ENCODE measurements at regions of chr11 and their contacts with region 1.

Region 1: GRCh38 chr11:86291466-86292262 is 10.4 kb upstream of the HIKESHI start:
- H3K4me3 ChIP-seq: no peak overlapping the region
- H3K27ac ChIP-seq: no peak overlapping the region
- H3K4me1 ChIP-seq: no peaks in the 10 kb centered on the region
- CTCF ChIP-seq: peak; percentile 33; the same call in 1 of the 2 replicates

Region 2: GRCh38 chr11:85854557-85855340 is 436.9 kb before region 1 on chr11:
- CTCF ChIA-PET with region 1: interaction called, 13 read pairs
- POLR2A ChIA-PET with region 1: no interaction called
- H3K4me3 ChIP-seq: peak overlapping the region; percentile 39
- H3K27ac ChIP-seq: no peak overlapping the region
- H3K4me1 ChIP-seq: no peaks in the 10 kb centered on the region
- CTCF ChIP-seq: peak; percentile 88

Region 3: GRCh38 chr11:86099874-86100273 is 191.8 kb before region 1 on chr11:
- CTCF ChIA-PET with region 1: no interaction called
- POLR2A ChIA-PET with region 1: no interaction called
- H3K4me3 ChIP-seq: no peak overlapping the region
- H3K27ac ChIP-seq: no peak overlapping the region
- H3K4me1 ChIP-seq: 0 out of 2 replicates have a peak, but pooled peaks cover 2% of the 10 kb centered on the region
- CTCF ChIP-seq: no peak

Region 4: DNA sequence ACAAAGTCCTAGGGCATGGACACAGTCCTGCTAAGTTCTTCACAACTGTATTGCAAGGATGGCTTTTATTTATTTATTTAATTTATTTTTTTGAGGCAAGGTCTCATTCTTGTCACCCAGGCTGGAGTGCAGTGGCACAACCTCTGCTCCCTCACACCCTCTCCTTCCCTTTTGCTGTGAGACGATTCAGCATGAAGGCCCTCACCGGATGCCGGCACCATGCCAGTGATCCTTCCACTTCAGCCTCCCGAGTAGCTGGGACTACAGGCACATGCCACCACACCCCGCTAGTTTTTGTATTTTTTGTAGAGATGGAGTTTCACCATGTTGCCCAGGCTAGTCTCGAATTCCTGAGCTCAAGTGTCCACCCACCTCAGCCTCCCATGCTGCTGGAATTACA is 29.3 kb before region 1 on chr11:
- CTCF ChIA-PET with region 1: interaction called, 3 read pairs
- POLR2A ChIA-PET with region 1: interaction called, 12 read pairs
- H3K4me3 ChIP-seq: no peak overlapping the region
- H3K27ac ChIP-seq: no peak overlapping the region
- H3K4me1 ChIP-seq: no peaks in the 10 kb centered on the region
- CTCF ChIP-seq: no peak

Region 5: DNA sequence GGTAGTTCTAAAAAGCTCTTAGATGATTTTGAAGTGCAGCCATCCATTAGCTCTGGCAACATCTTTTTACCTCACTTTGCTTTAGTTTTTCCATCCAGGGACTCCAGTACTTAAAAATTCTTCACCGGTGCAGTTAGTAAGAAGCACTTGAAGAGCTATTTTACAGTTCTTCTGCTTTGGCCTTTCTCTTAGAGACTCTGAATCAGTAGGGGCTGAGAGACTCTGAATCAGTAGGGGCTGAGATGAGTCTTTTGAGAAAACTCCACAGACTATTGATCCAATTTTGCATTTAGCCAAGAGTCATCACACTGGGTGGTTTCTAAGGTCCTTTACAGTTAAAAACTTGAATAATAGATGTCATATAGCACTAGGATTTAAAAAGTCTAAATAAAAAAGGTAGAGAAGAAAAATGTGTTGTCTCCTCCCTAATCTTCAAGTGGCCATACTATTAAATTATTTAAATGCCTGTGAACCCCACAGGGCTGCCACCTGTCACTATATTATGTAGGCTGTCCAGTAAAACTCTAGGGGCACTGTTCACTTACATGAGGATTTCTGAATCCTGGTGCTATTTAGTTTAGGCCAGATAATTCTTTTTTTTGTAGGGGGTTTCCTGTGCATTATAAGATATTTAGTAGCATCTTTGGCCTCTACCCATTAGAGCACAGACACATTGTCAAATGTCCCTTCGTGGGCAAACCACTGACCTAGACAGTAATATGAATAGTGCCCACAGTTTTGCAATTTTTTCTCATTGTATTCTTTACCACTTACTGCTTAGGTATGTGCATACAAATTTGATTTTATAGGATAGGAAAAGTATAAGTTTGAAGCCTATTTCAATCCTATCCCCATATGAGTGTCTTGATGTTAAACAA is 15.9 kb before region 1 on chr11:
- CTCF ChIA-PET with region 1: interaction called, 10 read pairs
- POLR2A ChIA-PET with region 1: no interaction called
- H3K4me3 ChIP-seq: no peak overlapping the region
- H3K27ac ChIP-seq: no peak overlapping the region
- H3K4me1 ChIP-seq: no peaks in the 10 kb centered on the region
- CTCF ChIP-seq: no peak